ENCODE measurements at regions of chr17 and their contacts with region 1.

Region 1: DNA sequence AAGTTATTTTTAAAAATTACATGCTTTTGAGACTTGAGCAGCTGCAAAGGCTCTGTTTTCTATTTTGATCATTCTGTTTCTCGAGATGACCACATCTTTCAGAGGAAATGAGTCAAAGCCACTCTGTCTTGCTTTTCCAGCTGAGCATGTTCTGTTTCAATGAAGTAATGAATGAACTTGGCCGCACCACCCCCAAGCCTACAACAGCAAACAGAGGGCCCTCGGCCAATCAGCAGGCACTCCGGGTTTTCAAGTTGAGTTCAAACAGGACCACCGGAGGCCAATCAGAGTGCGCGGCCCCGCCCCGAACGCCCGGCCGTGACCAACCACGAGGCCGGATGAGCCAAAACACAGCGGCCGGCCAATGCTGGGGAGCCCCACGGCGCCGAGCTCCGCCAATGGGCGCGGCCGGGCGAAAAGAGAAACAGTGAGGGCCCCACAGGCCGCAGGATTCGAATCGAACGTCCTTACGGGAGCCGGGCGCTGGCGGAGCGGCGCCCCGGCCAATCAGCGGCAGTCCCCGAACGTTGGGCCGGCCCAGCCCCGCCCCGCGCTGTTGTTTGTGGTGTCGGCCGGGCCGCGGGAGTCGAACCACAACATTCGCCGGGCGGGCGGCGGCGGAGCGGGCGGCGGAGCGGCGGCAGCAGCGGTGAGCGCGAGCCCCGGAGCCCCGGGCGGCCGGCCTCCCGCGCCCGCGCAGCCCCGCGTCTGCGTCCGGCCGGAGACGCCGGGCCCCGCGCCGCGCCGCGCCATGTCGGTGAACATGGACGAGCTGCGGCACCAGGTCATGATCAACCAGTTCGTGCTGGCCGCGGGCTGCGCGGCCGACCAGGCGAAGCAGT is at the start of gene UBALD2:
- DNase-seq: peak; percentile 97 to 99
- H3K4me3 ChIP-seq: peak within 1 kb of the TSS; percentile 77
- H3K27ac ChIP-seq: peak within 1 kb of the TSS; percentile 88
- H3K4me1 ChIP-seq: peaks cover 63% of the 10 kb centered on the region
- H3K27me3 ChIP-seq: no peaks in the 10 kb centered on the region
- CTCF ChIP-seq: no peak
- total RNA-seq, gene UBALD2: 110 and 134 TPM in 2 replicates

Region 2: GRCh38 chr17:76132574-76133338 is 132.2 kb before region 1 on chr17:
- CTCF ChIA-PET with region 1: interaction called, 6 read pairs
- POLR2A ChIA-PET with region 1: interaction called, 12 read pairs
- intact Hi-C with region 1: loop called (anchors 2 kb)
- DNase-seq: peak; percentile 77 to 98
- H3K4me3 ChIP-seq: no peak overlapping the region
- H3K27ac ChIP-seq: peak overlapping the region; percentile 26; the same call in 1 of the 2 replicates
- H3K4me1 ChIP-seq: peaks cover 28% of the 10 kb centered on the region
- H3K27me3 ChIP-seq: no peaks in the 10 kb centered on the region
- CTCF ChIP-seq: no peak

Region 3: GRCh38 chr17:76189741-76190140 is 75.2 kb before region 1 on chr17:
- CTCF ChIA-PET with region 1: no interaction called
- POLR2A ChIA-PET with region 1: interaction called, 18 read pairs
- intact Hi-C with region 1: no loop called
- DNase-seq: no peak
- H3K4me3 ChIP-seq: no peak overlapping the region
- H3K27ac ChIP-seq: no peak overlapping the region
- H3K4me1 ChIP-seq: no peaks in the 10 kb centered on the region
- H3K27me3 ChIP-seq: no peaks in the 10 kb centered on the region
- CTCF ChIP-seq: no peak

Region 4: DNA sequence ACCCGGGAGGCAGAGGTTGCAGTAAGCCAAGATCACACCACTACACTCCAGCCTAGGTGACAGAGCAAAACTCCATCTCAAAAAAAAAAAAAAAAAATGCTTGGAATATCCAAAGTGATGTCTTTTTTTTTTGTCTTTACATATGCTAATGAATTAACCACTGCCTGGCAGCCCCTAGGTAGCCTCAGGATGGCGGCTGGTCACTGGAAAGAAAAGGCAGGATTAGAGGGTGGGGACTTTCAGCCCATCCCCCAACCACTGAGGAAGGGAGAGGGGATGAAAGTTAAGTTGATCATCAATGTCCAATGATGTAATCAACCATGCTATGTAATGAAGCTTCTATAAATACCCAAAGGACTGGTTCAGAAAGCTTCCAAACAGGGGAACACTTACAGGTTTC is 51.5 kb before region 1 on chr17:
- CTCF ChIA-PET with region 1: interaction called, 3 read pairs
- POLR2A ChIA-PET with region 1: no interaction called
- intact Hi-C with region 1: loop called (anchors 2 kb)
- DNase-seq: no peak
- H3K4me3 ChIP-seq: no peak overlapping the region
- H3K27ac ChIP-seq: no peak overlapping the region
- H3K4me1 ChIP-seq: no peaks in the 10 kb centered on the region
- H3K27me3 ChIP-seq: no peaks in the 10 kb centered on the region
- CTCF ChIP-seq: no peak

Region 5: GRCh38 chr17:76252040-76252954 is 12.7 kb before region 1 on chr17:
- CTCF ChIA-PET with region 1: interaction called, 3 read pairs
- POLR2A ChIA-PET with region 1: interaction called, 15 read pairs
- intact Hi-C with region 1: loop called (anchors 1 kb)
- DNase-seq: peak; percentile 84 to 99
- H3K4me3 ChIP-seq: peak overlapping the region; percentile 35; the same call in 1 of the 2 replicates
- H3K27ac ChIP-seq: peak overlapping the region; percentile 98
- H3K4me1 ChIP-seq: peaks cover 37% of the 10 kb centered on the region
- H3K27me3 ChIP-seq: no peaks in the 10 kb centered on the region
- CTCF ChIP-seq: no peak

Measured in PC-9 (cell line).